SK-N-SH (cell line): ENCODE measurements at regions of chr5 and their contacts with region 1.

Region 1: GRCh38 chr5:32232441-32233219 is 58.5 kb upstream of the GOLPH3 start:
- DNase-seq: peak; percentile 71
- H3K4me3 ChIP-seq: no peak overlapping the region; a peak in 1 of 4 replicates
- H3K27ac ChIP-seq: no peak overlapping the region
- H3K4me1 ChIP-seq: peaks cover 0 to 9% of the 10 kb centered on the region in 2 experiments; a peak in 1 of 4 replicates
- H3K27me3 ChIP-seq: no peaks in the 10 kb centered on the region
- CTCF ChIP-seq: peak; percentile 86
- EP300 ChIP-seq: no peak
- RAD21 ChIP-seq: peak; percentile 83

Region 2: DNA sequence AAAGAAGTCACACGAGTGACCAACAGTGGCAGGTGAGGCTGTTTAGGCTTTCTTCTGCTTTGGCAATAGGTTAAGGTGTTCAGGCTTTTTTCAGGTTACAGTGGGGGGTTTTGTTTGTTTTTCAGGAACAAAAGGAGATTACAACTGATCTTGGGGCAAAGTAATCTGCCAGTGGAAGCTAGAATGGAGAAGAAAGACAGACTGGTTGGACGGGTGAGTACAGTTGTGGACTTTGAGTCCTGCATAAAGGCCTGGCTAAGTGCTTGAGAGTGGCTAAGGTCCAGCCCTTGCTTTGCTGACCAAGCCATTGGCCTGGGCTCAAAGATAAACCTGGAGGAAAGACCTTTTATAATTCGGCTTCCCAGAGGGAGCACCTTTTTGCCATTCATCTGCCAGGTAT is 17.0 kb after region 1 on chr5:
- CTCF ChIA-PET with region 1: interaction called, 12 read pairs
- POLR2A ChIA-PET with region 1: no interaction called
- DNase-seq: no peak
- H3K4me3 ChIP-seq: no peak overlapping the region
- H3K27ac ChIP-seq: no peak overlapping the region
- H3K4me1 ChIP-seq: no peaks in the 10 kb centered on the region
- H3K27me3 ChIP-seq: no peaks in the 10 kb centered on the region
- CTCF ChIP-seq: no peak
- EP300 ChIP-seq: no peak
- RAD21 ChIP-seq: no peak

Region 3: DNA sequence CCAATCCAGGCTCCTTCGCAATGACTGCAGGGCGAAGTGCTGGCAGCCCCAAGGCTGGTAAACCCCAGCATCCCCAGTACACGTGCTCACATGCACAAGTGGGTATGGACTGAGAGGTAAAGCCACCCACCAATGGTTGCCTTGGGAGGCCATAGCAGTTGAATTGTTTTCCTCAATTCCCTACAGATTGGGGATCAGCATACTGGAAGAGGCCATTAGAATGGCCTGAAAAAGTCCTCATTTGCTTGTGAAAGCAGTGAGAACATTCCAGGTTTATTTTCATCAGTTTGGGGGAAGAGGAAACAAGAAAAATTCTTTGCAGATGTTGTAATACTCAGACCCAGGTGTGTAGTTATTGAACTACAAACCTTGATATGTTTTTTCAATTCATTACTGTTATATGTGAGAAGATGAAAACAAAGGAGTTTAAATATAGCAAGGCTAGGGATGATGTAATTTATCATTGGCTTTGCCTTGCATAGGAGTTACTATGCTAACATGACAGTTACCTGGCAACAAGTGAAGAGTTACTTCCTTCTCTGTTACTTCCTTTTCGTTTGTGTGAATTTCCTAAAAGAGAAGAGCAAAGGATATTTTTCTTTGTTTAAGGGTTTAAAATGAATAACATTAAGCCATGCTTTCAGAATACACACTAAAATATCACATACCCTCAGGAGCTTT is 43.7 kb after region 1 on chr5:
- CTCF ChIA-PET with region 1: interaction called, 13 read pairs
- POLR2A ChIA-PET with region 1: no interaction called
- DNase-seq: no peak
- H3K4me3 ChIP-seq: no peak overlapping the region
- H3K27ac ChIP-seq: peak overlapping the region in 1 of 2 experiments; percentile 38; a peak in 2 of 4 replicates
- H3K4me1 ChIP-seq: peaks cover 0 to 6% of the 10 kb centered on the region in 2 experiments; a peak in 1 of 4 replicates
- H3K27me3 ChIP-seq: no peaks in the 10 kb centered on the region
- CTCF ChIP-seq: no peak
- EP300 ChIP-seq: no peak
- RAD21 ChIP-seq: no peak

Region 4: GRCh38 chr5:32339198-32339597 is 106.6 kb after region 1 on chr5:
- CTCF ChIA-PET with region 1: interaction called, 17 read pairs
- POLR2A ChIA-PET with region 1: no interaction called
- DNase-seq: no peak
- H3K4me3 ChIP-seq: no peak overlapping the region
- H3K27ac ChIP-seq: no peak overlapping the region
- H3K4me1 ChIP-seq: peaks cover 0 to 4% of the 10 kb centered on the region in 2 experiments; a peak in 1 of 4 replicates
- H3K27me3 ChIP-seq: no peaks in the 10 kb centered on the region
- CTCF ChIP-seq: no peak
- EP300 ChIP-seq: no peak
- RAD21 ChIP-seq: no peak

Region 5: DNA sequence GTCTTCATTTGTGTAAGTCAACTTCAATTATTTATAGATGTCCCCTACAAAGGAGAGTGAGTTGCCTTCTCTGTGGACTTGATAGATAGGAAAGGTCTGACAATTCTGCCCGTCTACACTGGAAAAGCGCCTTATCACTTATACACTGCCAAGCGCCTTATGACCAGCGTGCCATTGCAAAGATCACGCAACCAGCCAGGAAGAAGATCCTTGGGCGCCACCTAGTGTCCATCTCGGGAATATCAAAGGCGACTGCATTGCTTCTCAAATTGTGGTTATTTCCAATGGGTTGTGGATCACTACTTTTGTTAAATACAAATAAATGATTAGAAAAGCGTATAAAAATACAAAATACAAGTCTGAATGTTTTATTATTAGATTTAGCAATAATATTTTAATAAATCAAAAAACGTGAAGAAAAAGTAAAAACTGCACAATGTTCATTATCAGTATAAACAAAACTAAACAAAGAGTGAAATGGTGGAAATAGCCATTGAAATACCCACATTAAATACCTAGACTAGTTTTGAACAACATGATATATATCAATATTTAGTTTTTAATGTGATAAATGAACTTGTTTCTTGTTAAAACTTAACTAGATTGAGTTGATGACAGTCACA is 380.5 kb after region 1 on chr5:
- CTCF ChIA-PET with region 1: interaction called, 11 read pairs
- POLR2A ChIA-PET with region 1: no interaction called
- DNase-seq: peak; percentile 75
- H3K4me3 ChIP-seq: peak overlapping the region in 1 of 2 experiments; percentile 20; a peak in 1 of 4 replicates
- H3K27ac ChIP-seq: 0 out of 4 replicates have a peak overlapping the region, but pooled peaks of 1 of the 2 experiments have one; percentile 6
- H3K4me1 ChIP-seq: peaks cover 0 to 3% of the 10 kb centered on the region in 2 experiments; a peak in 2 of 4 replicates
- H3K27me3 ChIP-seq: no peaks in the 10 kb centered on the region
- CTCF ChIP-seq: peak; percentile 94
- EP300 ChIP-seq: no peak
- RAD21 ChIP-seq: peak; percentile 95